ENCODE measurements at regions of chr11 and their contacts with region 1.

Region 1: GRCh38 chr11:66386171-66387069 is 14.9 kb upstream of the SLC29A2 start:
- DNase-seq: peak; percentile 76 to 90 (median 82)
- ATAC-seq: peak; percentile 78
- H3K4me3 ChIP-seq: no peak overlapping the region
- H3K4me3 Mint-ChIP-seq: no peak overlapping the region
- H3K27ac ChIP-seq: no peak overlapping the region
- H3K27ac Mint-ChIP-seq: no peak overlapping the region
- H3K4me1 ChIP-seq: peaks cover 7% of the 10 kb centered on the region
- H3K4me1 Mint-ChIP-seq: peaks cover 6% of the 10 kb centered on the region
- H3K27me3 ChIP-seq: no peaks in the 10 kb centered on the region
- H3K27me3 Mint-ChIP-seq: peaks cover 10% of the 10 kb centered on the region
- CTCF ChIP-seq: peak; percentile 84

Region 2: GRCh38 chr11:66328307-66329144 is 57.9 kb before region 1 on chr11:
- CTCF ChIA-PET with region 1: interaction called, 4 read pairs
- POLR2A ChIA-PET with region 1: no interaction called
- intact Hi-C with region 1: loop called (anchors 1 to 5 kb)
- DNase-seq: peak; percentile 68 to 92 (median 77)
- ATAC-seq: peak; percentile 90
- H3K4me3 ChIP-seq: no peak overlapping the region
- H3K4me3 Mint-ChIP-seq: peak overlapping the region; percentile 42
- H3K27ac ChIP-seq: no peak overlapping the region
- H3K27ac Mint-ChIP-seq: peak overlapping the region; percentile 85
- H3K4me1 ChIP-seq: peaks cover 46% of the 10 kb centered on the region
- H3K4me1 Mint-ChIP-seq: peaks cover 39% of the 10 kb centered on the region
- H3K27me3 ChIP-seq: no peaks in the 10 kb centered on the region
- H3K27me3 Mint-ChIP-seq: no peaks in the 10 kb centered on the region
- CTCF ChIP-seq: peak; percentile 93

Region 3: GRCh38 chr11:66363805-66364535 is 22.4 kb before region 1 on chr11:
- CTCF ChIA-PET with region 1: interaction called, 14 read pairs
- POLR2A ChIA-PET with region 1: interaction called, 4 read pairs
- intact Hi-C with region 1: no loop called
- DNase-seq: peak; percentile 51 to 77 (median 60)
- ATAC-seq: peak; percentile 77
- H3K4me3 ChIP-seq: no peak overlapping the region
- H3K4me3 Mint-ChIP-seq: no peak overlapping the region
- H3K27ac ChIP-seq: no peak overlapping the region
- H3K27ac Mint-ChIP-seq: no peak overlapping the region
- H3K4me1 ChIP-seq: no peaks in the 10 kb centered on the region
- H3K4me1 Mint-ChIP-seq: no peaks in the 10 kb centered on the region
- H3K27me3 ChIP-seq: no peaks in the 10 kb centered on the region
- H3K27me3 Mint-ChIP-seq: no peaks in the 10 kb centered on the region
- CTCF ChIP-seq: peak; percentile 72

Region 4: DNA sequence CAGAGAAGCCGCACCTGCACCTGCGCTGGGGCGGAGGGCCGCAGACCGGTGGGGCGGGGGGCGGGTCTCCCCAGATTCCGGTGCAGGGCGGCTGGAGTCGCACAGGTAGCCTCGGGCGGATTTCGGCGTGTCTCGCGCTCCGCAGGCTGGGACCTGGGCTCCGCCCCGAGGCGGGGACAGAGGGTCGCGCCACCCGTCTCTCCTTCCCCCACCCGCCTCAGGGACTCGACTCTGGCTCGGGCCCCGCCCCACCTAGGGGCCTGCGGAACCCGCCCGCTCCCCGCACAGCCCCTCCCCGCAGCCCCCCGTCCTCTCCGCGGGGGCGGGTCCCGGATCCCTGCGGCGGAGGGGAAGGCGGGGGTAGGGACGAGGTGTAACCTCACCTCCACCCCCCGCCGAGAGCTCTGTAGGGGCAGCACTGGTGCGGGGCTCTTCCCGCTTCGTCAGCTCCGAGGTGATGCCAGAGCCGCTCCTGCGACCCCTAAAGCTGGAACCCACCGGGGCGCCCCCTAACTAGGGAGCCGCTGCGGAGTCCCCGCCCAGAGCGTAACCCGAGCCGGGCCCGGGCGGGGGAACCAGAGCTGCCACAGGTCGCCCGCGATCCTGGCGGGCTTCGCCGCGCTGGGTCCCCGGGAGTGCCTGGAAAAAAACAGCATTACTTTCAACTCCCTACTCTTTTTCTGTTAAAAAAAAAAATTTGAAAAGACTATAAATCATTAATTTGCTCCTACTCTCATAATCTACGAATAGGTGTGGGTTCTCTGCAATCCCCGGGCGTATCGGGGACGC is 14.6 kb before region 1 on chr11 and contains the start of gene SLC29A2:
- CTCF ChIA-PET with region 1: interaction called, 19 read pairs
- POLR2A ChIA-PET with region 1: interaction called, 41 read pairs
- intact Hi-C with region 1: loop called in 1 of 2 experiments (anchors 1 kb)
- DNase-seq: peak; percentile 50 to 89 (median 75)
- ATAC-seq: peak; percentile 73
- H3K4me3 ChIP-seq: peak within 1 kb of the TSS; percentile 79
- H3K4me3 Mint-ChIP-seq: peak within 1 kb of the TSS; percentile 97
- H3K27ac ChIP-seq: peak within 1 kb of the TSS; percentile 60 to 74
- H3K27ac Mint-ChIP-seq: peak within 1 kb of the TSS; percentile 92
- H3K4me1 ChIP-seq: peaks cover 16% of the 10 kb centered on the region
- H3K4me1 Mint-ChIP-seq: peaks cover 9% of the 10 kb centered on the region
- H3K27me3 ChIP-seq: no peaks in the 10 kb centered on the region
- H3K27me3 Mint-ChIP-seq: no peaks in the 10 kb centered on the region
- CTCF ChIP-seq: no peak
- total RNA-seq, gene SLC29A2: 9.7 TPM

Region 5: DNA sequence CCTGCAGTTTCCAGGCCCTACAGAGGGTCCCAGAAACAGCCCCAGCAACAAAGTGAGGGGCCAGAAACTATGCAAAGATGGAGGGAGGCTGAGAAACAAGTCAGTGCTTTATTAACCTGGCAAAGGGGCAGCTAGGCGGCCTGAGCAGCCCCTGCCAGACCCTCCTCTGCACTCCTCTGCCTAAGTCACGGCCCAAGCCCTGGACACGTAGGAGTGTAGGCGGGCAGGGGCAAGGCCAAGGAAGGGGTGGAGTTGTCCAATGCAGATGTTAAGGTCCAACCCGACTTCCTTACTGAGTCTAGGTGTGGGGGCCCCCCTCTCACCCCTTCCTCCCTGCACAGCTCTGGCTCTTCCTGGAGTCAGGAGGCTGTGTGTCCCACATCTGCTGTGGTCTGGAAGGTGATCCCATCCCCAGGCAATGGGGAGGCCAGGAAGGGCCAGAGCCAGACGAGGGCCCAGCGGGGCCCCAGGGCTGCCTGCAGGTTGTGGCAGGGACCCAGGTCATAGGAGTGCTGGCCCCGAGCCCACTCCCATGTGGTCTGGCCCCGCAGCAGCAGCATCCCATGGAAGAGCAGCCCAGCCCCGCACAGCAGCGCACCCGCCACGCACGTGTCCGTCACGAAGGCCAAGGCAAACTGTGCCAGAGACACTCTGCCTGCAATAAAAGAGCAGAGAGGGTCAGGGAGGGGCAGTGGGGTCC is 152.9 kb after region 1 on chr11:
- CTCF ChIA-PET with region 1: no interaction called
- POLR2A ChIA-PET with region 1: no interaction called
- intact Hi-C with region 1: no loop called
- DNase-seq: no peak
- ATAC-seq: no peak
- H3K4me3 ChIP-seq: no peak overlapping the region
- H3K4me3 Mint-ChIP-seq: no peak overlapping the region
- H3K27ac ChIP-seq: no peak overlapping the region
- H3K27ac Mint-ChIP-seq: no peak overlapping the region
- H3K4me1 ChIP-seq: peaks cover 19% of the 10 kb centered on the region
- H3K4me1 Mint-ChIP-seq: peaks cover 31% of the 10 kb centered on the region
- H3K27me3 ChIP-seq: no peaks in the 10 kb centered on the region
- H3K27me3 Mint-ChIP-seq: no peaks in the 10 kb centered on the region
- CTCF ChIP-seq: no peak

Measured in CD4-positive, alpha-beta T cell (primary cell).